ENCODE measurements at regions of chr1 and their contacts with region 1.

Region 1: GRCh38 chr1:12184008-12184681 is 17.4 kb downstream of the TNFRSF1B start:
- DNase-seq: peak; percentile 8

Region 2: DNA sequence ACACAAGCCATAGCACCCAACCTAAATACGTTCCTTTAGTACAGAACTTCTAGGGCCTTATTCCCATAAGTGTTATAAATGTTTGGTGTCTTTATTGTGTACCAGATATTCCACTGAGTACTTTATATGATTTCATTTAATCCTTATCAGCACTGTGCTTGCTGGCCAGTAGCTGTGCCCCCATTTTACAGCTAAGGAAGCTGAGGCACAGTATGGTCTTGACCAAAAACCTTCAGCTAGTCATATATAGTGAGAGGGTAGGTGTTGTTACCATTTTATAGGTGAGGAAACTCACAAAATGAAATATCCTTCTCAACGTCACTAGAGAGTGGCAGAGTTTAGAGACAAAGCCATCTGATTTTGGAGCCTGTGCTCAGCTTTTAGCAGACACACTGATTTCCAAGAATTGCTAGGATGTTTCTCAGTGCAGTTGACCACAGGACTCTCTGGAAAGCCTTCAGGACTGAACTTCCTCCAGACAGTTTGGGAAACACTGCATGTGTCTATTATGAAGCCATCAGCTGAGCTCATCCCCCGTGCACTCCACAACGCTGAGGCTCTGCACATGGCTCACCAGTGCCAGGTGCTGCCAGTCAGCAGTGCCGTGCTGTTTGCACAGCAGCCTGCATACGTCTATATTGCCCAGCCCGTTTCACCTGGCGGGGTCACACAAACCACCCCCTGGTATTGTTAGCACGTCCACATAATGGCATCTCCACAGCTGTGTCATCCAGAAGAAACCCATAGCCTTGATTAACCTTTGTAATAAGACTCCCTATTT is 352.0 kb before region 1 on chr1:
- in situ Hi-C with region 1: no loop called
- DNase-seq: no peak

Region 3: DNA sequence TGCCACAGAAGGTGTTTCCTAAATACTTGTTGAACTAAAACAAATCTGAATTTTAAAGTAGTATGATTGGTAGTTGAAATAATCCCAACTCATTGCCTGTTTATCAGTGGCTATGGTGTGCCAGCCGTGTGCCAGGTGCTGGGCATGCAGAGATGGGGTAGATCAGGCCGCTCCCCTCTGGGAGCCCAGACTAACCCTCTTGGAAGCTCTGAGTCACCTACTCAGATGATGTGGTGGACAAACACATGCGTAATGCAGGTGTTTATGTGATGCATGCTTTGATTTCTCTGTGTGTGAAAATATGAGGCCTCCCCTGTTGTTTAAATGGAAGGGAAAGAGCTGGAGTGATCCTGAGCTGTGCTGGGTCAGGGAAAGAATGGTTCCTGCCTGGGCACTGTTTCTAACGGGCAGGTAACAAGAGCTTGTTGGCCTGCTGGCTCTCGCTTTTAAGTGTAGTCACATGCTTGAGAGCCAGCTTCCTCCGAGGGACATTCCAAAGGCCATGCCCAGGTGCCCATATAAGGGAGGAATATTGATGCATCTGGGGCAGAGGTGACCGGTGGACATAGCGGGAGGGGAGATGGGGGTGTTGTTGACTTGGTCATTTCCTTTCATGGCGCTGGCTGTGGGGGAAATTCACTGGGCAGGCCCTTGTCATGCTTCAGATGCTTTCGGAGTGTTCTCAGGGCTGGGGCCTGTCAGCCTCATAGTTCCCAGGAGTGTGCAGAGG is 193.7 kb before region 1 on chr1:
- in situ Hi-C with region 1: no loop called
- DNase-seq: no peak

Region 4: GRCh38 chr1:12019858-12020509 is 164.2 kb before region 1 on chr1:
- in situ Hi-C with region 1: no loop called
- DNase-seq: no peak

Region 5: DNA sequence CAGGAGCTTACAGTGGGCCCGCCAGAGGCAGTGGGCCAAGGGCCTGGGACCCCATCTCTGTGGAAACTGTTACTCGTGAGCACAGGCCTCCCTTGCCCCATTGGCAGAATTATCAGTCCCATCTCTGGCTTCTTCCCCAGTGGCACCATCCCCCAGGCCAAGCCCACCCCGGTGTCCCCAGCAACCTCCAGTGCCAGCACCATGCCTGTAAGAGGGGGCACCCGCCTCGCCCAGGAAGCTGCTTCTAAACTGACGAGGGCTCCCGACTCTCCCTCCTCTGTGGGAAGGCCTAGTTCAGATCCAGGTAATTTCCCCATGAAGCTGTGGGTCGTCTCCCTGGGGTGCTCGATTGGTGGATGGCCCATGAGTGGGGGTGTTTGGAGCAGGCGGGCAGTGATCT is 74.2 kb before region 1 on chr1:
- in situ Hi-C with region 1: loop called (anchors 5 kb)
- DNase-seq: no peak

Region 6: GRCh38 chr1:12296623-12297022 is 112.5 kb after region 1 on chr1:
- in situ Hi-C with region 1: no loop called
- DNase-seq: no peak